Heart right ventricle (tissue), 16 donors: ENCODE measurements at regions of chr1 and their contacts with region 1.

Region 1: DNA sequence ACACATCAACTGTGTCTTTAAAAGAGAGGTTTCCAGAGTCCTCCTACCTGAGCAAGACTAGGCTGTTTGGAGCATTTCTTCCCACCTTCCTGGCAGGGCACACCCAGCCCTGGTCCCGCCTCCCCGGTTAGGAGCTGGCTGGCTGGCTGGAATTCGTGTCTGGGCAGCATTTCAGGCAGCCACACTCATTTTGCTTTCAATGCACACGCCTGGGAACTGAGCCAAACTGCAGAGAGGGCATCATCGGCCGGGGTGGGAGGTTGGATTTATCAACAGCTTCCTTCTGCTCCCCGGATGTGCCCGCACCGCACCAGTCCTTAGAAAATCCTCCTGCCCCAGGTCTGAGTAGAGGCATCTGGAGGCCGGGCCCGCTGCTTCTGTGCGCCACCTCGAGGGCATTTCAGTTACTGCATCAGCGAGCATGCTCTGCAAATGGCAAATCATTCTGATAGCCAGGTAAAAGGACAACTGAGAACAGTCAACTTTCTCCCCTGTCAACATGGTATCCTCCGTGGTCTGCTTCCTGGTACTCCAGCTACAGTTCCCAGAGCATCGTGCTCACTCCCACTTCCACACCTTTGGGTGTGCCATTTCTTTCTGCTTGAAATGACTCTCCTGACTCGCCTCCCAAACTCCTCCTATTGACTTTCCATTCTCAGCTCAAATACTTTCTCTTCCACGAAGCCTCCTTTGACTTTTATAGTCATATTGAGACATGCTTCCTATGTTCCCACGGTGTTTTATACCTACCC is 20.6 kb downstream of the TCEA3 start:
- DNase-seq: peak; percentile 88 to 90
- ATAC-seq: peak; percentile 83 to 94 (median 90)
- H3K4me3 ChIP-seq: peak overlapping the region in 3 of 10 donors; percentile 0 to 25 (median 3)
- H3K27ac ChIP-seq: peak overlapping the region in 9 of 10 donors; percentile 30 to 83 (median 64)
- H3K4me1 ChIP-seq: peaks cover 18 to 67% (median 43%) of the 10 kb centered on the region in 9 donors
- H3K27me3 ChIP-seq: no peaks in the 10 kb centered on the region
- CTCF ChIP-seq: peak; percentile 88 to 97 (median 95)

Region 2: DNA sequence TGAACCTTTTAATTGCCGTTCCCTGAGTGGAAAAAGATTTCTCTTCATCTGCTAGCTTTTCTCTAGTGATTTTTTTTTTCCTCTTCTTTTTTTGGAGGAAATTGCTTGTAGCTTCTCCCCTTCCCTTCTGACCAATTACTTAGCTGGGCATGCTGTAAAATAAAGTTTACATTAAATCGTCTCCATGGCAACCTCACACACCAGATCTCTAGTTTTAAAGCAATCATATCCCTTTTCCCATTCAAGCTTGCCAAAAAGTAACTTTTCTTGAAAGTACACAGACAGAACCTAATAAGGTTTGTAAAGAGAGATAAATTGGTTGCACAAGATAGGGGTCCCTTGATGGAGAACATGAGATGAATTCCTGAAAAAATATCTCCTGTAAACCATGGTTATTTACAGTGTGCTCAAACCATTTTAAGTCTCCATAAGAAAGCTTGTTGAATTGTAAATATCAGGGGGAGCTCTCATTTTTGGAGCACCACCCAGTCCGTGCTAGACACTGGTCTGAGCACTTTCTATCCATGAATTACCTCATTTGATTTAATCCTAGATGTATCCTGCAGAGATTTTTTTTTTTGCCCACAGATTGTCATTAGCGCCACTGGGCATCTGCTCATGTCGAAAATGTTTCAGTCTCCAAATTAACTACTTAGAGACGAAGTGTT is 154.0 kb before region 1 on chr1:
- intact Hi-C with region 1: no loop called
- DNase-seq: no peak
- ATAC-seq: no peak
- H3K4me3 ChIP-seq: no peak overlapping the region
- H3K27ac ChIP-seq: no peak overlapping the region
- H3K4me1 ChIP-seq: no peaks in the 10 kb centered on the region
- H3K27me3 ChIP-seq: peaks cover 0 to 12% (median 0%) of the 10 kb centered on the region in 7 donors
- CTCF ChIP-seq: no peak

Region 3: DNA sequence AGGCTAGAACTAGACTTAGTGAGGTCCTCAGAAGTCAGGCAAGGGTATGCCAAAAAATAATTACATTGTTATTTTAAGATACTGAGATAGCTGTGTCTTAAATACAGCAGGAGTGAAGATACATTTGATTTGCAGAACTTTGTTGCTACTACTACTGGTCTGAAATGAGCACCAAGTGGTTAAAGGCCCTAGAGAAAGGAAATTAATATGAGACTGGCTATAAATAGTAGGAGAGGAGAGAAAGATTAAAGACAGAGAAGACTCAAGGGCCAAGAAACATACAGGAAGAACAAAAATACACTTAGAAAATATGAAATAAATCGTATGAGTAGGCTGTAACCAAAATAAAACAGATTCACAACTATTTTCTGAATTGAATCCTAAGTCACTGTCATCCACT is 81.1 kb before region 1 on chr1:
- intact Hi-C with region 1: loop called in 1 of 10 experiments (anchors 10 kb)
- DNase-seq: no peak
- ATAC-seq: no peak
- H3K4me3 ChIP-seq: no peak overlapping the region
- H3K27ac ChIP-seq: peak overlapping the region in 1 of 10 donors; percentile 13
- H3K4me1 ChIP-seq: peaks cover 0 to 21% (median 14%) of the 10 kb centered on the region in 9 donors
- H3K27me3 ChIP-seq: no peaks in the 10 kb centered on the region
- CTCF ChIP-seq: no peak

Region 4: DNA sequence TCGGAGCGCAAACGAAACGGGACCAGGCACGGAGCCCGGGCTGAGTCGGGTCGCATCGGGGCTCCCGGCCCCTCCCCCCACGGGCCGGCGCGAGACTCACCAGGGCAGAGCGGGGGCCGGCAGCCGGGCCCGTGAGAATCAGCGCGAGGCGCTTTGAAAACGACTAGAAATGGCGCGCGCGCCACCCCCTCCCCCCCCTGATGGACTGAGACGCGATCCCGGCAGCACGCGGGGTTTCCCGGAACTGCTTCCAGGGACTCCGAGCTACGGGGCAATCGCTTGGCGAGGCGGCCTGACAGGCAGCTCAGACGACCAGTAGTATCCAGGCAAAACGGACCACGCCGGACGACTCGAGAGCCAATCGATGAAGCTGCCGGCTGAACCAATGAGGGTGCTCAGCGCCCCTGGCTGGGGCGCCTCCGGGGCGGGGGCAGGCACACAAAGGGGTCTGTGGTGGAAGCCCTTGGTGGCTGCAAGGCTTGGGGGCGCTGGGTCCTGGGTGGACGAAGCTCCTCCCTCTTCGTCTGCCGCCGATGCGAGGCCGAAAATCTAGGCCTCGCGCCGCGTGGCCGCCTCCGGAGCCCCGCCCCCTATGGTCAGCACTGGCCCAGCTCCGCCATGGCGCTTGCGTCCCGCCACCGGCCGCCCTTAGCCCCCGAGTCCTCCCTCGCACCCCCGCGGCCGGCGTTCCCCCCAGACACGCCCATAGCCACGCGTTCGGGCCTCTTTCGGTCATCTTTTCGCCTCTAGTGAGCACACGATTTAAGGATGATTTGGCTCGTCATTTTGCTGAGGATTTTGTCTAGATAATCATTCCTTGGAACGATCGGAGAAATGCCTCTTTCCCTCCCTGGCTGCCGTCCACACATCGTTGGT is 59.6 kb before region 1 on chr1 and contains the start of gene HNRNPR:
- intact Hi-C with region 1: loop called in 8 of 10 experiments (anchors 1 to 10 kb)
- DNase-seq: peak; percentile 100
- ATAC-seq: peak; percentile 96 to 99 (median 98)
- H3K4me3 ChIP-seq: peak within 1 kb of the TSS; percentile 87 to 99 (median 90)
- H3K27ac ChIP-seq: peak within 1 kb of the TSS; percentile 92 to 98 (median 96)
- H3K4me1 ChIP-seq: peaks cover 2 to 49% (median 42%) of the 10 kb centered on the region in 9 donors
- H3K27me3 ChIP-seq: no peaks in the 10 kb centered on the region
- CTCF ChIP-seq: peak in 6 of 9 donors; percentile 14 to 35 (median 22)
- total RNA-seq, gene HNRNPR: 56.7 to 72.7 (median 66.4) TPM

Region 5: DNA sequence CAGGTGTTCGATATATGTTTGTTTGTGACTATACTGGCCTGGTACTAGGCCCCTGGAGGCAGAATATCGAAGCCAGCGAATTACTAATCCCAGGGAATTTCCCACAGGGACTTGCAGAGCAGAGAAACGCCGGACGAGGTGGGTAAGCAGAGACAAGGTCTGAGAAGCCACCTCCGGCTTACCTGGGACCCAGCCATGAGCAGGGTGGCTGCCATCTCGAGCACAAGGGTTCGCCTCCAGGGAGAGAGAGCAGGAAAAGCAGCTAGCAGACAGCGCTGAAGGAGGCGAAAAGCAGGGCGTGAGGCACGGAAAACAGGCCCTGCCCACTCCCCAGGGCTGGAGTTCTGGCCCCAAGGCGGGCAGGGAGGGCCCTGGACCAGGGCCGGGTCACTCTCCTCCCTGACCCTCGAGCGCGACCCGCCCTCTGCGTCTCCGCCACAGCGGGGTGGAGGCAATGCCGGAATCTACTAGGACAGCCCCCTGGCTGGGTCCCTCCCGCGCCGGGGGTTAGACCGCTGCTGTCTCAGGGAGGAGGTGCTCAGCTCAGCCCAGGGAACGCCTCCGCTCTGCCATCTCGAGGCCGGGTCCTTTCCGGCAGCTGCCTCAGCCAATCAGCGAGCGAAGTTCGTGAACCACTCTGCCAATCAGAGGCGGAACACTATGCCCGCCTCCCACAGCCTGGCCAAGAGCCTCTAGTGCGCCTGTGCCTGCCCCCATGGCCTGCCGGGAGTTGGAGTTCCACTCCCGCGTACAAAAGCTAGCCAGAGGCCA is 35.9 kb before region 1 on chr1:
- intact Hi-C with region 1: loop called in 7 of 10 experiments (anchors 2 to 5 kb)
- DNase-seq: peak; percentile 98 to 99
- ATAC-seq: peak; percentile 90 to 95 (median 93)
- H3K4me3 ChIP-seq: peak overlapping the region; percentile 65 to 98 (median 86)
- H3K27ac ChIP-seq: peak overlapping the region; percentile 76 to 99 (median 97)
- H3K4me1 ChIP-seq: peaks cover 11 to 51% (median 47%) of the 10 kb centered on the region in 9 donors
- H3K27me3 ChIP-seq: no peaks in the 10 kb centered on the region
- CTCF ChIP-seq: peak in 4 of 9 donors; percentile 12 to 31 (median 28)